WTC11 (cell line): ENCODE measurements at regions of chr17 and their contacts with region 1.

Region 1: DNA sequence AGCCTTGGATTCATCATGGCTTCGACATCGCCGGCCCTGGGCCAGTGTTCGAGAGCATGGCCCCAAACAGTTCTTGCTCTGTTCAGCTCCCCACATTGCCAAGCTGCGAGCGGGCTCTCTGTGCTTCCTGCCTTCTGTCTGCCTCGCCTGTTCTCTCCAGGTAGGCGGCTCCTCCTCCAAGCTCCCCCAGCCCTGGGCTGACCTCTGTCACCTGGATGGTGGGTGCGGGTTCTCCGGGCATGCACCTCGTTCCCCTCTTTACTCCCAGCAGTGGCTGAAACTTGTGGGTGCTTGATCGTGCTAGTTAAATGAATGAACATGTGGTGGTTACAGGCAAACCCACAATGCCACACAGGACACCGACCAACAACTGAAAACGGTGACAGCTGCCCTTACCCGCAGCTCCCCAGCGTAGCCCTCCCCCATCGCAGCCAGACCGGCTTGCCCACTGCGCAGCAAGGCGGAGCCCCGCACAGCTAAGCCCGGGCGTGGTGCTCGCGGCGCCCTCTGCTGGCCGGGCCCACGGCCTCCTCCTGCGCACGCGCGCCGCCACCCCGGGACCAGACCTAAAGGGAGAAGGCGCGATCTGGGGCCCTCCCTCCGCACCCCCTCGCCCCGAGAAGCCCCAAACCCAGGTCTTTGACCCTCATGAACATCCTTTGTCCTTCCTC is 23.0 kb upstream of the EIF1 start:
- DNase-seq: peak; percentile 90
- ATAC-seq: peak; percentile 82
- H3K4me3 Mint-ChIP-seq: peak overlapping the region; percentile 85
- H3K27ac Mint-ChIP-seq: peak overlapping the region; percentile 94
- H3K4me1 Mint-ChIP-seq: peaks cover 16% of the 10 kb centered on the region
- H3K27me3 Mint-ChIP-seq: peaks cover 17% of the 10 kb centered on the region
- CTCF ChIP-seq: peak; percentile 71

Region 2: DNA sequence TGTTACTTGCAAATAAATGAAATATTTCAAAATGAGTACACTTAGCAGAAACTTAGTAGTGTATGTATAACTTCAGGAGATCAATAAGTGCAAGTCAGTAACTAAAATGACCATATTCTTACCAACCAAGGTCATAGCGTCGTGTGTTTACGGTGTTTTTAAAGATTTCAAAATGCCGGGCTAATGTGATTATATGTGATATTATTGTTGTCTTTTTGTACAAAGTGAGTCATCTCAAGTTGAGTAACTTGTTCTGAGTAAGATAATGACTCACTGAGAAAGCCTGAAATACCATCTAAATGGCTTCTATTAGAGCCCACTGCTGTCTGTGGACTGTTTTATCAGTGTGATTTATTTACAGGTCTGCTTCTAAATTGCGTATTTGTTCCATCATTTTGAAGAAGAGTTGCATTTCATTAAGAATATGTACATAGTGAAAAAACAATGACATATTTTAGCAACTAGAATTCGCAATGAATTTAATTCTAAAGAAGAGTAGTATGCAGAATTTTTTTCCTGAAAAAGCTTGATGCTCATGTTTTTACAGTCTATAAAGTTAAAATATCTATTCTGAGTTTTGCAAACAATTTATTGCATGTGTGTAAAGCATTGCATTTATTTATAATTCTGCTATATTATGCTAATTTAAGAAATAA is 811.4 kb before region 1 on chr17:
- CTCF ChIA-PET with region 1: interaction called, 14 read pairs
- POLR2A ChIA-PET with region 1: no interaction called
- DNase-seq: no peak
- ATAC-seq: no peak
- H3K4me3 Mint-ChIP-seq: no peak overlapping the region
- H3K27ac Mint-ChIP-seq: no peak overlapping the region
- H3K4me1 Mint-ChIP-seq: peaks cover 32% of the 10 kb centered on the region
- H3K27me3 Mint-ChIP-seq: peaks cover 10% of the 10 kb centered on the region
- CTCF ChIP-seq: no peak

Region 3: DNA sequence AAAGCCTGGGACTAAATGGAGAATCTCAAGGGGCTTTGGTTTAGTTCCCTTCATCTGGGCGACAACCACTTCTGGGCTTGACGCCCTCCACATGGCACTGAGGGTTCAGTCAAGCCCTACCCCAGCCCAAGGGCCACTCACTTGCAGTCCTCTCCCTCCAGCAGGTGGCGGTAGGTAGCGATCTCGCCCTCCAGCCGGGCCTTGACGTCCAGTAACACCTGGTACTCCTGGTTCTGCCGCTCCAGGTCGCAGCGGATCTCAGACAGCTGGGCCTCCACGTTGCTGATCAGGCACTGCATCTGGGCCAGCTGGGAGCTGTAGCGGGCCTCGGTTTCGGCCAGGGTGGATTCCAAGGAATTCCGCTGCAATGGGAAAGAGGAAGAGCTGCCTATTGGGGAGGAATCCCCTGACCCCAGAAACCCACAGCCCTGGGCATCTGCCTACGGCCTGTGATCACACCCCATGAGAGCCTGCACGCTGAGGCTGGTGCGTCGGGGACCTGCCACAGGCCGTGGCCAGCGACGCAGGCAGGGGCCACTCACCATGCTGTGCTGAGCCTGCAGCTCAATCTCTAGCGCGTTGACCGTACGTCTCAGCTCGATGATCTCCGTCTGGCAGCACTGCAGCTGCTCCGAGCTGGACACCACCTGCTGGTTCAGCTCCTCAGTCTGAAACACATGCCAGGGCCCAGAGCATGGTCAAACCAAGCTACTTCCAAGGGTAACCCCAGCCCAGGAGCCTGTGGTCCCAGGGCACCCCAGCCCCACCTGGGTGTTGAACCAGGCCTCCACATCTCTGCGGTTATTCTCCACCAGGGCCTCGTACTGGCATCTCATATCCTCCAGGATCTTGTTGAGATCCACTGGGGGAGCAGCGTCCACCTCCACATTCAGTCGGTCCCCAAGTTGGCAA is 178.6 kb before region 1 on chr17:
- CTCF ChIA-PET with region 1: interaction called, 26 read pairs
- POLR2A ChIA-PET with region 1: no interaction called
- DNase-seq: peak; percentile 92
- ATAC-seq: peak; percentile 96
- H3K4me3 Mint-ChIP-seq: no peak overlapping the region
- H3K27ac Mint-ChIP-seq: no peak overlapping the region
- H3K4me1 Mint-ChIP-seq: no peaks in the 10 kb centered on the region
- H3K27me3 Mint-ChIP-seq: peaks cover 17% of the 10 kb centered on the region
- CTCF ChIP-seq: peak; percentile 50

Region 4: GRCh38 chr17:41538565-41538991 is 127.1 kb before region 1 on chr17:
- CTCF ChIA-PET with region 1: interaction called, 11 read pairs
- POLR2A ChIA-PET with region 1: no interaction called
- DNase-seq: no peak
- ATAC-seq: peak; percentile 38
- H3K4me3 Mint-ChIP-seq: no peak overlapping the region; the same call in 1 of the 2 replicates
- H3K27ac Mint-ChIP-seq: no peak overlapping the region
- H3K4me1 Mint-ChIP-seq: peaks cover 48% of the 10 kb centered on the region
- H3K27me3 Mint-ChIP-seq: no peaks in the 10 kb centered on the region
- CTCF ChIP-seq: no peak

Region 5: GRCh38 chr17:41593311-41593981 is 72.3 kb before region 1 on chr17:
- CTCF ChIA-PET with region 1: interaction called, 13 read pairs
- POLR2A ChIA-PET with region 1: no interaction called
- DNase-seq: no peak
- ATAC-seq: no peak
- H3K4me3 Mint-ChIP-seq: no peak overlapping the region
- H3K27ac Mint-ChIP-seq: no peak overlapping the region
- H3K4me1 Mint-ChIP-seq: peaks cover 3% of the 10 kb centered on the region
- H3K27me3 Mint-ChIP-seq: no peaks in the 10 kb centered on the region; the same call in 1 of the 2 replicates
- CTCF ChIP-seq: no peak

Region 6: GRCh38 chr17:41635121-41636097 is 30.3 kb before region 1 on chr17:
- CTCF ChIA-PET with region 1: interaction called, 15 read pairs
- POLR2A ChIA-PET with region 1: no interaction called
- DNase-seq: no peak
- ATAC-seq: peak; percentile 62
- H3K4me3 Mint-ChIP-seq: no peak overlapping the region
- H3K27ac Mint-ChIP-seq: peak overlapping the region; percentile 84
- H3K4me1 Mint-ChIP-seq: peaks cover 10% of the 10 kb centered on the region
- H3K27me3 Mint-ChIP-seq: no peaks in the 10 kb centered on the region
- CTCF ChIP-seq: no peak

Region 7: GRCh38 chr17:41738077-41738735 is 72.5 kb after region 1 on chr17:
- CTCF ChIA-PET with region 1: interaction called, 10 read pairs
- POLR2A ChIA-PET with region 1: no interaction called
- DNase-seq: peak; percentile 91
- ATAC-seq: peak; percentile 71
- H3K4me3 Mint-ChIP-seq: no peak overlapping the region
- H3K27ac Mint-ChIP-seq: peak overlapping the region; percentile 82
- H3K4me1 Mint-ChIP-seq: peaks cover 22% of the 10 kb centered on the region
- H3K27me3 Mint-ChIP-seq: peaks cover 47% of the 10 kb centered on the region
- CTCF ChIP-seq: peak; percentile 98